Caco-2 (cell line): ENCODE measurements at regions of chr13 and their contacts with region 1.

Region 1: DNA sequence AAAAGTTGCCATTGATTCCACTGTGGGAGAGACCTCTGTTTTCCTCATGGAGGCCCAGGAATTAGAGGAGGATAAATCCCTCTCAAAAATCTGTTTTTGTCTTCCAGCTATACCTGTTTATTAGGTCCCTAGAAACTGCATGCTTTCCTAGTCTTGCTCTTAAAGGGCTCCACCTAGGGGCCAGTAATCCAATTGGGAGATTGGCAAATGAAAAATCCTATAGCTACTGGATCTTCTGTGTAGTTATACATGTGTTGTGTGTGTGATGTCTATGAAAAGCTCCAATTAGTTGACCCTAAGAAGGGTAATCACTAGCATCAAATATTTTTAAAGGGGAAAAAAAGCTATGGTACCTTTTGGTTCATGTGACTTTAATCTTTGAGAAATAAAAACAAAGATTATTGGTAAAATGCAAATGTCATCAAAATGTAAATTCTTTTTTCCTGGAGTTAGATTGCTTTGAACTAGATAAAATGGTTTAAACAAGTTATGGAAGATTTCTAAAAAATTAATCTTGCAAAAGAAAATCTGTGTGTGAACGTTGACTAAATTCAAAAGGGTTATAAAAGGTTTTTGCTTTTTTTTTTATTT is 63.4 kb upstream of the C1QTNF9B start:
- DNase-seq: peak in 1 of 2 experiments; percentile 70
- H3K4me3 ChIP-seq: no peak overlapping the region
- H3K4me3 Mint-ChIP-seq: no peak overlapping the region
- H3K27ac Mint-ChIP-seq: no peak overlapping the region
- H3K4me1 ChIP-seq: peaks cover 4% of the 10 kb centered on the region; the same call in 1 of the 2 replicates
- H3K4me1 Mint-ChIP-seq: peaks cover 6% of the 10 kb centered on the region
- H3K27me3 ChIP-seq: no peaks in the 10 kb centered on the region
- H3K27me3 Mint-ChIP-seq: no peaks in the 10 kb centered on the region
- CTCF ChIP-seq: peak; percentile 71 to 88

Region 2: DNA sequence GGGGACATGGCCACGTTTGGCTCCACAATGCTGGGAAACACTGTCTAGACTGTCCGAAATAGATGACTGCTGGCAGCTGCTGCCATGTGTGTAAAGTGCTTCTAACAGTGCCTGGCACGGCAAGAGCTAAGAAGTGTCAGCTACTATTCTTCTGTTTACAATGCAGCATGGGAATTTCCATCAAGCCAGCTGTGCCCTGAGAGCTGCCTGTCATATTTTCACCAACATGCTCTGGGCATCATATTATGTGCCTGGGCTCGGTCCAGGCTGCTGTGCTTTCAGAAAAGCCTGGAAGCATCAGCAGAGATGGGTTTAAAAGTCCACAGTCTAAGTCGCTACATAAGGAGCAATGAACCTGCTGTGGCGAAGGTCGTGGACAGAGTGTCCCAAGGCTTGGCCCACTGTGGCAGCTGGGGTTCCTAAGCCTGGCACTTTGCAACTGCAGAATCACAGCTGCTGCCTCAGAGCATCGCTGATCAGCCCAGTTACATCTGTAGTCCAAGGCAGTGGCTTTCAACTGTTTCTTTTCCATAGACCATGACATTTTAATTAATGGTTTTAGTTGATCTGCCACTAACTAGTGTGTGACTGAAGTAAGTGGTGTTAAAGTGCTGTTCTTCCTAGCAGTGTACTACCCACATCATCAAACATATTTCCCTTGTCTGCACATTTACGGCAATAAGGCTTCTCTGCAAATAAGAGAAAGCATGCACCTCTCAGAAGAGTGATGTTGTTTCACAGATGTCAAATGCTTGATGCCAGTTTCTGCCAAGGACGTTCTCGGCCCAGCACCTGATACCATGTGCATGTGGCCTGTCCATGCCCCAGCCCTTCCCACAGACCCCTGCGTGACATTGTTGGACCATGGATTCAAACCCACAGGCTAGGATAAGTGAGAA is 32.4 kb after region 1 on chr13:
- CTCF ChIA-PET with region 1: no interaction called
- POLR2A ChIA-PET with region 1: no interaction called
- intact Hi-C with region 1: no loop called
- DNase-seq: no peak
- H3K4me3 ChIP-seq: no peak overlapping the region
- H3K4me3 Mint-ChIP-seq: no peak overlapping the region
- H3K27ac Mint-ChIP-seq: no peak overlapping the region
- H3K4me1 ChIP-seq: peaks cover 42% of the 10 kb centered on the region
- H3K4me1 Mint-ChIP-seq: peaks cover 20% of the 10 kb centered on the region
- H3K27me3 ChIP-seq: no peaks in the 10 kb centered on the region
- H3K27me3 Mint-ChIP-seq: no peaks in the 10 kb centered on the region
- CTCF ChIP-seq: no peak

Region 3: GRCh38 chr13:24040835-24041234 is 80.2 kb after region 1 on chr13:
- CTCF ChIA-PET with region 1: interaction called, 10 read pairs
- POLR2A ChIA-PET with region 1: no interaction called
- intact Hi-C with region 1: no loop called
- DNase-seq: no peak
- H3K4me3 ChIP-seq: no peak overlapping the region
- H3K4me3 Mint-ChIP-seq: no peak overlapping the region
- H3K27ac Mint-ChIP-seq: no peak overlapping the region
- H3K4me1 ChIP-seq: peaks cover 17% of the 10 kb centered on the region
- H3K4me1 Mint-ChIP-seq: peaks cover 14% of the 10 kb centered on the region
- H3K27me3 ChIP-seq: no peaks in the 10 kb centered on the region
- H3K27me3 Mint-ChIP-seq: no peaks in the 10 kb centered on the region
- CTCF ChIP-seq: no peak

Region 4: DNA sequence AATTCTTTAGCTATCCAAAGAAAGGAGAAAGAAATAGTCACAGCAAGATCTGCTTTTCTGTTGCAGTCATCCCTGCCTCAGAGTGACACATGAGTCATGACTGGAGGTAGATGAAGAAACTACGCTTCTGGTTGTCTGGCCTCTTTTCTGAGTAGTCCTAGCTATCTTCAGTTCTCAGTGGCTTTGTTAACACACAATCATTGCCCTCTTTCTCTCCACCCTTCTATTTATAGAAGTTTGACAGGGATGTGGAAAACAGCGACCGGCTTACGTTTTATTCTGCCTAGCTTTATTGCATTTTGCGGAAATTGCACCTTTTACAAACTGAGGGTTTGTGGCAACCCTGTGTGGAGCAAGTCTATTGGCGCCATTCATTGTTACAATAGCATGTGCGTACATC is 226.5 kb after region 1 on chr13:
- CTCF ChIA-PET with region 1: no interaction called
- POLR2A ChIA-PET with region 1: no interaction called
- intact Hi-C with region 1: no loop called
- DNase-seq: no peak
- H3K4me3 ChIP-seq: no peak overlapping the region
- H3K4me3 Mint-ChIP-seq: no peak overlapping the region
- H3K27ac Mint-ChIP-seq: no peak overlapping the region
- H3K4me1 ChIP-seq: peaks cover 35% of the 10 kb centered on the region
- H3K4me1 Mint-ChIP-seq: peaks cover 32% of the 10 kb centered on the region
- H3K27me3 ChIP-seq: no peaks in the 10 kb centered on the region
- H3K27me3 Mint-ChIP-seq: no peaks in the 10 kb centered on the region
- CTCF ChIP-seq: no peak

Region 5: GRCh38 chr13:24217601-24218281 is 257.1 kb after region 1 on chr13:
- CTCF ChIA-PET with region 1: no interaction called
- POLR2A ChIA-PET with region 1: no interaction called
- intact Hi-C with region 1: no loop called
- DNase-seq: no peak
- H3K4me3 ChIP-seq: no peak overlapping the region
- H3K4me3 Mint-ChIP-seq: no peak overlapping the region
- H3K27ac Mint-ChIP-seq: no peak overlapping the region
- H3K4me1 ChIP-seq: peaks cover 17% of the 10 kb centered on the region
- H3K4me1 Mint-ChIP-seq: peaks cover 12% of the 10 kb centered on the region
- H3K27me3 ChIP-seq: no peaks in the 10 kb centered on the region
- H3K27me3 Mint-ChIP-seq: no peaks in the 10 kb centered on the region
- CTCF ChIP-seq: no peak